ENCODE measurements at regions of chr10 and their contacts with region 1.

Region 1: GRCh38 chr10:6144406-6145165 is 55.8 kb downstream of the RBM17 start:
- DNase-seq: peak; percentile 89
- H3K4me3 Mint-ChIP-seq: peak overlapping the region; percentile 85
- H3K27ac Mint-ChIP-seq: peak overlapping the region; percentile 86
- H3K4me1 Mint-ChIP-seq: peaks cover 82% of the 10 kb centered on the region
- H3K27me3 Mint-ChIP-seq: no peaks in the 10 kb centered on the region

Region 2: GRCh38 chr10:6128591-6129251 is 15.9 kb before region 1 on chr10:
- intact Hi-C with region 1: loop called (anchors 1 kb)
- DNase-seq: no peak
- H3K4me3 Mint-ChIP-seq: peak overlapping the region; percentile 67
- H3K27ac Mint-ChIP-seq: peak overlapping the region; percentile 92
- H3K4me1 Mint-ChIP-seq: peaks cover 40% of the 10 kb centered on the region
- H3K27me3 Mint-ChIP-seq: no peaks in the 10 kb centered on the region

Measured in activated T-helper 1 cell treated with anti-CD3 and anti-CD28 coated beads, Interleukin-12 subunit alpha, Interleukin-12 subunit beta, Interleukin-2, Interleukin-4 antibody, amounts not matched to agents 30 ng/mL and 10 ng/mL and 1 ng/mL, durations not matched to agents 14 hours and 24 hours and 36 hours (primary cell).